Sigmoid colon (tissue), 7 donors: ENCODE measurements at regions of chr19 and their contacts with region 1.

Region 1: GRCh38 chr19:39125554-39126311 is at the start of gene PAK4:
- DNase-seq: peak; percentile 99
- H3K4me3 ChIP-seq: peak within 1 kb of the TSS; percentile 75 to 99 (median 96)
- H3K27ac ChIP-seq: peak within 1 kb of the TSS; percentile 81 to 90 (median 87)
- H3K4me1 ChIP-seq: peaks cover 0 to 56% (median 51%) of the 10 kb centered on the region in 4 donors
- H3K27me3 ChIP-seq: peaks cover 0 to 4% (median 0%) of the 10 kb centered on the region in 3 donors
- CTCF ChIP-seq: no peak
- EP300 ChIP-seq: no peak
- POLR2A ChIP-seq: peak in 1 of 2 donors; percentile 82
- total RNA-seq, gene PAK4: 6.2 to 27.1 (median 9.3) TPM

Region 2: DNA sequence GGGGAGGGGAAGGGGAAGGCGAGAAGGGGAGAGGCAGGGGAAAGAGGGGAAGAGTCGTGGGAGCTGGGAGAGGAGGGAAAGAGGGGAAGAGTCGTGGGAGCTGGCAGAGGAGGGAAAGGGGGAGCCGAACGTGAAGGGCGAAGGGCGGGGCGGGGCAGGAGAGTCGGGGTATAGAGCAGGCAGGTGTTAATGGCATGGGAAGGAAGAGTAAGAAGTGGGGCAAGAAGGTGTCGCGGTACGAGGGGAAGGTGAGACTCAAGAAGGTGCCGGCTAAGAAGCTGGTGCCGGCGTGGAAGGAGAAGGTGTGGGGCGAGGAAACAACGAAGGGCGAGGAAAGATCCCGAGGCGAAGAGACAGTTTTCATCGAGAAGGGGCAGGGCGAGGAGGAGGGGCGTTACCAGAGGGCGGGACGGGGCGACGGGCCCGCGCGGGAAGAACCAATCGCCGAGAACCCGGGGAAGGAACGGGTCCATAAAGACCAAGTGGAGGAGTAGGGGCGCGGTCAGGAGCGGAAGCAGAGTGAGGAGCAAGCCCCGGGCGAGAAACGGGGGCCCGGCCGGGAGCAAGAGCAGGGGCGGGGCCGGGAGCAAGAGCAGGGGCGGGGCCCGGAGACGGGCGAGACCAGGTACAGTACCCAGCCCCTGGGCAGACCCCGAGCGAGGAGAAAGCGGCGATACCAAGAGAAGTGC is 789.6 kb before region 1 on chr19:
- intact Hi-C with region 1: loop called (anchors 10 kb)
- DNase-seq: peak; percentile 99
- H3K4me3 ChIP-seq: peak overlapping the region; percentile 52 to 69 (median 64)
- H3K27ac ChIP-seq: peak overlapping the region; percentile 92 to 98 (median 94)
- H3K4me1 ChIP-seq: peaks cover 0 to 17% (median 14%) of the 10 kb centered on the region in 4 donors
- H3K27me3 ChIP-seq: no peaks in the 10 kb centered on the region
- CTCF ChIP-seq: no peak
- EP300 ChIP-seq: no peak
- POLR2A ChIP-seq: peak in 1 of 2 donors; percentile 58

Region 3: DNA sequence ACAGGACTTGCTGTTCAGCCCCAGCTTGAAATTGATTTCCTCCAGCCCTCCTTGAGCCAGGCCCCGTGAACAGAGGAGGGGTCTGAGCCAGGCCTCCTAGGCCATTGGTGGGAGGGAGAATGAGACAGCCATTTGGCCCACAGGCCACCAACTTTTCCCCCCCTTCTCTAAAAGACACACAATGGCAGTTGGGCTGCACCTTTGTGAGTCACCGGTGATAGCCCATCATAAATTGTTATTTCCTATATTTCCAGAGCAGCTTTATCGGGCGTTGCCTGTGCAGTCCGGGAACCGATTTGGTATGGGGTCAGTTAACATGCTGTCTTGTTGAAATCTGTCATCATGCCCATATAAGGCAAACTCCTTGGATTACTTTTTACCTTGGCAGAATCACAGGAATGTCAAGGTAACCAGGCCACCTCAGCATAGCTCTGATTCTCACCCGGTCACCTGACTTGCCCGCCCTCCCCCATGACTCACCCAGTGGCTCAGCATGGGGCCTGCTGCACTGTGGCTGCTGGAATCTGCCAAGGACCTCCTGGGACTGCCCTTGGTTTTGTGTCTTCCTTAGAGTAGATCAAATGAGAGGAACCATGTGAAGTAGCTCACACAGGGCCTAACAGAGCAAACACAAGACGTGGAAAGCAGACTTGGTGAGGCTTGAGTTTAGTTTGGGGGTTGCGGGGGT is 442.2 kb before region 1 on chr19:
- intact Hi-C with region 1: no loop called
- DNase-seq: peak; percentile 80
- H3K4me3 ChIP-seq: no peak overlapping the region
- H3K27ac ChIP-seq: peak overlapping the region; percentile 80 to 97 (median 96)
- H3K4me1 ChIP-seq: peaks cover 0 to 80% (median 73%) of the 10 kb centered on the region in 4 donors
- H3K27me3 ChIP-seq: no peaks in the 10 kb centered on the region
- CTCF ChIP-seq: no peak
- EP300 ChIP-seq: peak in 1 of 4 donors; percentile 22
- POLR2A ChIP-seq: no peak

Region 4: GRCh38 chr19:39144245-39145071 is 18.7 kb after region 1 on chr19:
- intact Hi-C with region 1: loop called (anchors 2 kb)
- DNase-seq: no peak
- H3K4me3 ChIP-seq: peak overlapping the region in 2 of 4 donors; percentile 13 to 30
- H3K27ac ChIP-seq: peak overlapping the region; percentile 80 to 91 (median 87)
- H3K4me1 ChIP-seq: peaks cover 0 to 39% (median 38%) of the 10 kb centered on the region in 4 donors
- H3K27me3 ChIP-seq: no peaks in the 10 kb centered on the region
- CTCF ChIP-seq: no peak
- EP300 ChIP-seq: no peak
- POLR2A ChIP-seq: no peak

Region 5: DNA sequence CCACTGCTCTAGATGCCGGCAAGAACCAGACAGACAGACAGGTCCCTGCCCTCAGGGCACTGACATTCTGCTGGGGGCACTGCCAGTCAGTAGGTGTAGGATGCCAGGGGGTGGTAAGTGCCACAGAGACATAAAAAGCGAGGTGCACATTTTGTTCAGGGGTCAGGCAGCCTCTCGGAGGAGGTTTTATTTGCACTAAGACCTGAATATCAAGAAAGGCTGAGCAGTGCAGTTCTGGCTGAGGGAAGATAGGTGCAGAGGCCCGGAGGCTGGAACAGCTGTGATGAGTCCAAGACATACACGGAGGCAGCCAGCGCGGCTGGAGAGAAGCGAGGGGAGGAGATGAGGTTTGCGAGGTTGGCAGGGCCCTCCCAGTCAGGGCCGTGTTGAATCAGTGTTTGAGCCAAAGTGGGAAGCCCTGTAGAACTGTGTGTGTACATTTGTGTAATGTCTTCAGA is 34.6 kb after region 1 on chr19:
- intact Hi-C with region 1: no loop called
- DNase-seq: peak; percentile 87
- H3K4me3 ChIP-seq: no peak overlapping the region
- H3K27ac ChIP-seq: peak overlapping the region; percentile 58 to 73 (median 70)
- H3K4me1 ChIP-seq: peaks cover 0 to 57% (median 52%) of the 10 kb centered on the region in 4 donors
- H3K27me3 ChIP-seq: no peaks in the 10 kb centered on the region
- CTCF ChIP-seq: no peak
- EP300 ChIP-seq: no peak
- POLR2A ChIP-seq: no peak

Region 6: GRCh38 chr19:39187559-39187957 is 61.8 kb after region 1 on chr19:
- intact Hi-C with region 1: loop called (anchors 1 kb)
- DNase-seq: no peak
- H3K4me3 ChIP-seq: no peak overlapping the region
- H3K27ac ChIP-seq: no peak overlapping the region
- H3K4me1 ChIP-seq: no peaks in the 10 kb centered on the region
- H3K27me3 ChIP-seq: peaks cover 0 to 20% (median 6%) of the 10 kb centered on the region in 3 donors
- CTCF ChIP-seq: peak in 1 of 4 experiments; percentile 38
- EP300 ChIP-seq: no peak
- POLR2A ChIP-seq: no peak

Region 7: DNA sequence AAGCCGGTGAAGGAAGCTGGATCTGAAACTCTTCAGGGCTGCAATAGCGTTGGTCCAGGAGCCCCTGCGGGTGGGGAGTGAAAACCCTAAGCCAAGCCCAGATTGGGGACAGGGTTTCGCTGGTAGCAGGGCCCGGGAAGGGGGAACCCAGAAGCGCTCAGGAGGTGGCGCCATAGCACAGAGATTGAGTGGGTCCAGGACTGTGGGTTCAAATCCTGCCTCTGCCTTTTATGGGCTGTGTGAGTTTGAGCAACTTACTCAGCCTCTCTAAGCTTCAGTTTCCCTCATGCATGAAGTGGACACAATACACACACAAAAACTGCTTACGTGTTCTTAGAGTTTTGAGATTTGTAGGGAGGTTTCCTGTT is 86.6 kb after region 1 on chr19:
- intact Hi-C with region 1: no loop called
- DNase-seq: no peak
- H3K4me3 ChIP-seq: no peak overlapping the region
- H3K27ac ChIP-seq: no peak overlapping the region
- H3K4me1 ChIP-seq: no peaks in the 10 kb centered on the region
- H3K27me3 ChIP-seq: peaks cover 0 to 9% (median 0%) of the 10 kb centered on the region in 3 donors
- CTCF ChIP-seq: no peak
- EP300 ChIP-seq: no peak
- POLR2A ChIP-seq: no peak

Region 8: DNA sequence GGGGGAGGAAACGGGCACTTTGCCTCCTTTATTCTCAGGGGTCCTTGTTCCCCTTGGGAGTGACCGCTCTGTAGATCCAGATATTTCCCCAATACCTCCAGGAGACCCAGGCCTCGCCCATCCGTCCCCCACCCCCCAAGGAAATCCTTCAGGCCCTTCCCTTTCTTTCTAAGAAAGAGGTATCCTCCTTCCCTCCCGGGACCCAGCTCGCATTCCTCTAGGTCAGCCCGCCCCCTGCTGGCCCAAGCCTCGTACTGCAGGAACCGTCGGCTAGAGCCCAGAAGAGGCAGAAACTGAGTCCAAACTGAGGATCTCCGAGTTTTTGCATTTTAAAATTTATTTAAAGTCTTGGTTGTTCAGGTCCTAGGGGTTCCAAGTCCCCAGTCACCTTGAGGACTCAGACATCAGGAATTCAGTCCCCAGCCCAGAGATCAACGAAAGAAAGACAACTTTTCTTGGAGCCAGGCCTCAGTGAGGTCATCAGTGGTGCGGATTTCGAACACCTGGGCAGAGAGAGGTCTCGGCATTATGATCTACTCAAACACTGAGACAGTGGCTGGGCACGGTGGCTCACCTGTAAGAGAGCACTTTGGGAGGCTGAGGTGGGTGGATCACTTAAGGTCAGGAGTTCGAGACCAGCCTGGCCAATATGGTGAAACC is 202.4 kb after region 1 on chr19:
- intact Hi-C with region 1: loop called (anchors 1 kb)
- DNase-seq: peak; percentile 91
- H3K4me3 ChIP-seq: no peak overlapping the region
- H3K27ac ChIP-seq: no peak overlapping the region
- H3K4me1 ChIP-seq: no peaks in the 10 kb centered on the region
- H3K27me3 ChIP-seq: no peaks in the 10 kb centered on the region
- CTCF ChIP-seq: peak; percentile 85 to 96 (median 92)
- EP300 ChIP-seq: no peak
- POLR2A ChIP-seq: no peak

Region 9: DNA sequence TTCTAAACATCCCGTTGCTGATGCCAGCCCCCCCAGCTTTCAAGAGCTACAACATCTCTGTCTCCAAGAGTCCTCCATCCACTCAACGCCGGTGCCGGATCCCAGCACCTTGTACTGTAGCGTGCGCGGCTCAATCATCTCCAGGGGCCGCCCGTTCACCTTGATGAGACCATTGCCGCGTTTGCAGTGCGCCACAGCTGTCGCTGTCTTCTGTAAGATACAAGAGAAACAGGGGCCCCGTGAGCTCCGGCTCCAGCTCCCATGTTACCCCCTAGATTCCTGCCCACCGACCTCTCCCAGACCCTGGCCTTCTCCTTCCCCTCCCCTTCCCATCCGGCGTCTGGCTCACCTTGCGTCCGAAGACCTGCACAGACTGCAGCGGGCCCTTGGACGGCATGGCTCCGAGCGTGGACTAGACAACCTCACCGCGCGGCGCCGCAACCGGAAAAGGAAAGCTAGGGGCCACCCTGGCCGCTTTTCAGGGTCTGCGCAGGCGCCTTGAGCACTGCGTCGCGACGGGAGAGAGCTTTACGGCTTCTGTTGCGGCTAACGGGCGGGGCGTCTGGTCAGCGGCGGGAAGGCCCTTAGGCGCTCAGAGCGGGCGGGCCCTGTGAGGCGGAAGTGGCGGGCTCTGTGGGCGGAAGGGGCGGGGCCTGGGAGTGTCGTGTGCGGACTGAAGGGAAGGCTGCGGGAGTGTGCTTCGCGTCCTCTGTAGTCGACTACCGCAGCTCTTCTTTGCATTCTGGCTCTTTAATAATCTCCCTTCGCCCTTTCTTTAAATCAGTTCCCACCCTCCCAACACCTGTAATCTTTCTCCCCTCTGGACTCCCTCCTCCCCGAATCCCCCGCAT is 310.0 kb after region 1 on chr19 and contains the start of gene RPS16:
- intact Hi-C with region 1: loop called (anchors 10 kb)
- DNase-seq: peak; percentile 100
- H3K4me3 ChIP-seq: peak within 1 kb of the TSS; percentile 90 to 99 (median 96)
- H3K27ac ChIP-seq: peak within 1 kb of the TSS; percentile 89 to 95 (median 91)
- H3K4me1 ChIP-seq: peaks cover 0 to 34% (median 32%) of the 10 kb centered on the region in 4 donors
- H3K27me3 ChIP-seq: peaks cover 0 to 3% (median 0%) of the 10 kb centered on the region in 3 donors
- CTCF ChIP-seq: no peak
- EP300 ChIP-seq: peak in 1 of 4 donors; percentile 63
- POLR2A ChIP-seq: peak; percentile 94 to 98
- total RNA-seq, gene RPS16: 1,648 to 4,043 (median 3,423) TPM

Region 10: GRCh38 chr19:39532233-39533002 is 406.7 kb after region 1 on chr19 and contains the start of gene EID2B:
- intact Hi-C with region 1: loop called (anchors 5 kb)
- DNase-seq: peak; percentile 98
- H3K4me3 ChIP-seq: peak within 1 kb of the TSS; percentile 70 to 89 (median 78)
- H3K27ac ChIP-seq: peak within 1 kb of the TSS; percentile 86 to 94 (median 92)
- H3K4me1 ChIP-seq: peaks cover 0 to 26% (median 13%) of the 10 kb centered on the region in 4 donors
- H3K27me3 ChIP-seq: no peaks in the 10 kb centered on the region
- CTCF ChIP-seq: peak; percentile 94 to 99 (median 98)
- EP300 ChIP-seq: no peak
- POLR2A ChIP-seq: peak; percentile 44 to 74
- total RNA-seq, gene EID2B: 3.9 to 7.7 (median 5.3) TPM

Region 11: DNA sequence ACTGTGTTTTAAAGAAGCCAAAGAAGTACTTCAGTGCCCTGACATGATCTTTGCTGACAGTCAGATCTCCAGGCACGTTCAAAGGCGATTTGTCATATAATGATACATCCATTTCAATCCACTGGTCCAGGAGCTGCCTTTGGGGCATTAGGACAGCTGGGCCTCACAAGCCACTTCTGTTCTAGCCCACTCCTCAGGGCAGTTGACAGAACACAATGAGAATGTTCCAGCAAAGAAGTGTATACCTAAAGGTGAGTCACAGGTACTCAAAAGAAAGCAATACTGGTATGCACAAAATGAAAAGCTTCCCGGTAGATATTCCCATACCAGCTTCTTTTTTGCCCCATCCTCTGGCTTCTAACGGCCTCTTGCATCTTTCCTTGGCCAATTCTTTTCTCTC is 1053.0 kb after region 1 on chr19:
- intact Hi-C with region 1: no loop called
- DNase-seq: no peak
- H3K4me3 ChIP-seq: no peak overlapping the region
- H3K27ac ChIP-seq: no peak overlapping the region
- H3K4me1 ChIP-seq: no peaks in the 10 kb centered on the region
- H3K27me3 ChIP-seq: no peaks in the 10 kb centered on the region
- CTCF ChIP-seq: no peak
- EP300 ChIP-seq: no peak
- POLR2A ChIP-seq: no peak